Activated T-helper 2 cell treated with anti-CD3 and anti-CD28 coated beads, Interferon-gamma antibody, Interleukin-2, Interleukin-4, amounts not matched to agents 10 μg/mL and 5 μg/mL and 100 μg/mL, durations not matched to agents 14 hours and 24 hours and 36 hours (primary cell): ENCODE measurements at regions of chr3 and their contacts with region 1.

Region 1: DNA sequence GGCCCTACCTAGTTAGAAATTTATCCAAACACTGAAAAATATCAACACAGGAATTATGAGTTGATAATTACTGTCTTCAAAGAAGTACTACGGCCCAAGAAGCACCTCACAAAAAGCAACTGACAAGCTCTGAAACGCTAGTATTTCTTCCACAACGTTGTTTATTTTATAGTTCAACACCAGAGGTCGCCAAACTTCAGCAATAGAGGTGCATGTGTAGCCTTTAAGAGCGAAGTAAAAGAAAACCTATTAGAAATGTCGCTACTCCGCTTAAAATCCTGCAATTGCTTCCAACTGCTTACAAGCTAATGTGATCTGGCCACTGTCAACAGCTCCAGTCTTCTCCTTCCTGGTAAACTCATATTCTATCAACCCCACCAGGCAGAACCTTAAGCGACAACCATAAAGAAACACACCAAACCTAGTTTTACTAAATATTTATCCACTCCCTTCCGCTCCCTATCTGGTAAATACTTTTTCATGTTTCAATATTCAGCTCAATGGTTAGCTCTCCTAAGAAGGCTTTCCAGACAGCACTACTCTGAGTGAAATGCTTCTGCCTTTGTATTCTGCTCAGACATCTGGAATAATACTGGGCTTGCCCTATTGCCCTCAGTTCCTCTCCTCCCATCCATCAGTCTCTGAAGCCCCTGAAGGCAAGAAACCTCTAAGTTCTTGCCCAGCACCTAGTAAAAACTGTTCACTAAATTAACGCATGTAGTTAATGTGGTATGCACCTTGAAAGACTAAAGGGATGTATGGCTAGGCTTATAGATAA is 110.2 kb downstream of the NR1I2 start:
- DNase-seq: peak; percentile 12
- H3K4me3 Mint-ChIP-seq: no peak overlapping the region
- H3K27ac Mint-ChIP-seq: no peak overlapping the region
- H3K4me1 Mint-ChIP-seq: peaks cover 2% of the 10 kb centered on the region
- H3K27me3 Mint-ChIP-seq: no peaks in the 10 kb centered on the region

Region 2: DNA sequence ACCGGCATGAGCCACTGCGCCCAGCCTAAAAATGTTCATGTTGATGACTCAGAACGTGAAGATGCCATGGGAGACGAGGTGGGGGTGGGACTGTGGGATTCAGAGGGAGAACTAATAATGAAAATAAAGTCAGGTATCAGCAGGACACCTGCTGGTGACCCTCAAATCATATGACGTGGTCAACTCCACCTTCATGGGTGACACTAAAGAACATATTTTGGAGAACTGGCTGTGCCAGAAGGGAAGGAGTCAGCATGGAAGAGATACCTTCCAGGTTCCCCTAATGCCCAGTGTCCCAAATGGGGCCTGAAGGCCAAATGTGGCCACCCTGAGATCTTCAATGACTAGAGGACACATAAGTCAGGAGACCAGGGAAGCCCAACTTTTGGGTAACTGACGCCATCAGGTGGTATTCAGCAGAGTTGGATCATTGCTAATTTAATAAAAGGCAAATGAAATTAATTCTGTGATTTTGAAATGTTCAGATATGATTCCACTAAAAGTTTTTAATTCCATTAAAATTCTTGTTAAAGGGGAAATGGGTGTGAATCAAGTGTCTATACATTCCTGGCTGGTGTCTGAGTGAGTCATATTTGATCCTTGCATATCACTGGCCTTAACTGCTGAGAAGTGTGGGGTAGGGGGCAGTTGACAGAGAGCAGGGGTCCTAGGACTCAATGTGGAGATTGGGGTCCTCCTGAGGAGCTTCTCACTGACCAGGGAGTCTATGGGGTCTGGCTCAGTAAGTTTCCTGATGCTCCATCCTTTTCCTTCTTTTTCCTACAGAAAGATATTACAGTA is 290.8 kb after region 1 on chr3:
- intact Hi-C with region 1: loop called (anchors 5 kb)
- DNase-seq: no peak
- H3K4me3 Mint-ChIP-seq: no peak overlapping the region
- H3K27ac Mint-ChIP-seq: no peak overlapping the region
- H3K4me1 Mint-ChIP-seq: no peaks in the 10 kb centered on the region
- H3K27me3 Mint-ChIP-seq: peaks cover 18% of the 10 kb centered on the region

Region 3: DNA sequence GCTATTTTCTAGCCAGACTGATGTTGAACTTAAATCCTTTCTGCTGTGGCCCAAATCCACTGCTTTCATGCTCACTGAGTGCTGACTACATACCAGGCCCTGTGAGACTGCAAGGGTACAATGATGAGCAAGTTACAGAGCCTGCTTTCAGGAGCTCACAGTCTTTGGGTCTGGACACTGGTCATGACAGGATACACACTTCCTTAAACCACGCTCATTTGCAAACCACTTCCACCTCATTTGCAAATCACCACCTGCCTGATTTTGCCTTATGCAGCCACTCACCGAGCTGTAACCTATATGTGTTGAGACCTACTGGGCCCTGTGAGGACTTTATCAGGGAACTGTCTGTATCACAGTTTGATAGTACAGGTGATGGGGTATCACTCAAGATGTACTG is 507.2 kb after region 1 on chr3:
- intact Hi-C with region 1: no loop called
- DNase-seq: no peak
- H3K4me3 Mint-ChIP-seq: no peak overlapping the region
- H3K27ac Mint-ChIP-seq: no peak overlapping the region
- H3K4me1 Mint-ChIP-seq: no peaks in the 10 kb centered on the region
- H3K27me3 Mint-ChIP-seq: no peaks in the 10 kb centered on the region

Region 4: GRCh38 chr3:120417272-120417911 is 525.3 kb after region 1 on chr3:
- intact Hi-C with region 1: loop called (anchors 1 kb)
- DNase-seq: peak; percentile 81
- H3K4me3 Mint-ChIP-seq: peak overlapping the region; percentile 80
- H3K27ac Mint-ChIP-seq: no peak overlapping the region
- H3K4me1 Mint-ChIP-seq: peaks cover 14% of the 10 kb centered on the region
- H3K27me3 Mint-ChIP-seq: peaks cover 21% of the 10 kb centered on the region